PC-9 (cell line): ENCODE measurements at regions of chr12 and their contacts with region 1.

Region 1: GRCh38 chr12:124625867-124626675 is 58.7 kb upstream of the NCOR2 start:
- DNase-seq: peak; percentile 91 to 93
- H3K4me3 ChIP-seq: no peak overlapping the region
- H3K27ac ChIP-seq: peak overlapping the region; percentile 84
- H3K4me1 ChIP-seq: peaks cover 58% of the 10 kb centered on the region
- H3K27me3 ChIP-seq: no peaks in the 10 kb centered on the region
- CTCF ChIP-seq: no peak

Region 2: GRCh38 chr12:124311292-124312109 is 314.6 kb before region 1 on chr12:
- CTCF ChIA-PET with region 1: no interaction called
- POLR2A ChIA-PET with region 1: no interaction called
- intact Hi-C with region 1: no loop called
- DNase-seq: no peak
- H3K4me3 ChIP-seq: no peak overlapping the region
- H3K27ac ChIP-seq: no peak overlapping the region
- H3K4me1 ChIP-seq: no peaks in the 10 kb centered on the region
- H3K27me3 ChIP-seq: peaks cover 50% of the 10 kb centered on the region
- CTCF ChIP-seq: no peak

Region 3: DNA sequence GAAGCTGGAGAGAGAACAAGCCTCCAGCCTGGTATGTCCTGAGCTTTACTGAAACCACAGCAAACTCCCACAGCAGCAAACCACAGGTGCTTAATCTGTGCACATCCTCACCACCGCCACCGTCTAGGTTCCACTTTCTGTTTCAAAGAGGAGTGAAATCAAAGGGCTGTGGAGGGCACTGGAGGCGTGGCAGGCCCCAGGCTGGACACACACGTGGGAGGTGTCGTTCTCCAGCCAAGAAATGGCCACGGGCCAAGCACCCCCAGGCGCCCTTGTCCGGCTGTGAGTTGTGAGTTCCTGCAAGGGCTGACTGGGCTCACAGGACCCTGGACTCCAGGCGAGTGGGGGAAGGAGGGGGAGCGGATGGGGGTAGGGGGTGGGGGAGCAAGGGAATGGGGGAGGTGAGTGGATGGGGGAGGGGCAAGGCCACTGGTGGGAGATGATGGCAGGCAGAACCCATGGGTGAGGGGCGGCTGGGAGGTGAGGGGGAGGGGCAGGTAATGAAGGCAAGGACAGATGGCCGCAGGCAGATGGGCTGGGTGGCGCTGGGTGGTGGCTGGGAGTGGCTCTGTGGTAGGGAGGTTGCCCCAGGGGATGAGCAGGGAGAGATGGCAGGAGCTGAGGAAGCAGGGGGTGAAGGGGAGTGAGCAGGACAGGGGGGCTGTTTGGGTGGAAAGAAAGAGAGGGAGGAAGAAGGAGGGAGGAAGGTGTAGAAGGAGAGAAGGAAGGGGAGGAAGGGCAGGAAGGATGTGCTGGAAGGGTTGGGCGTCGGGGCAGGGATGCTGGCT is 145.4 kb before region 1 on chr12:
- CTCF ChIA-PET with region 1: no interaction called
- POLR2A ChIA-PET with region 1: no interaction called
- intact Hi-C with region 1: no loop called
- DNase-seq: peak; percentile 91 to 98
- H3K4me3 ChIP-seq: no peak overlapping the region; the same call in 1 of the 2 replicates
- H3K27ac ChIP-seq: peak overlapping the region; percentile 59
- H3K4me1 ChIP-seq: peaks cover 28% of the 10 kb centered on the region
- H3K27me3 ChIP-seq: no peaks in the 10 kb centered on the region
- CTCF ChIP-seq: no peak

Region 4: GRCh38 chr12:124581307-124582107 is 44.6 kb before region 1 on chr12:
- CTCF ChIA-PET with region 1: no interaction called
- POLR2A ChIA-PET with region 1: no interaction called
- intact Hi-C with region 1: no loop called
- DNase-seq: no peak
- H3K4me3 ChIP-seq: no peak overlapping the region
- H3K27ac ChIP-seq: no peak overlapping the region
- H3K4me1 ChIP-seq: peaks cover 3% of the 10 kb centered on the region; the same call in 1 of the 2 replicates
- H3K27me3 ChIP-seq: no peaks in the 10 kb centered on the region
- CTCF ChIP-seq: no peak

Region 5: GRCh38 chr12:124656947-124657434 is 30.9 kb after region 1 on chr12:
- CTCF ChIA-PET with region 1: no interaction called
- POLR2A ChIA-PET with region 1: interaction called, 14 read pairs
- intact Hi-C with region 1: no loop called
- DNase-seq: no peak
- H3K4me3 ChIP-seq: no peak overlapping the region
- H3K27ac ChIP-seq: no peak overlapping the region
- H3K4me1 ChIP-seq: no peaks in the 10 kb centered on the region; the same call in 1 of the 2 replicates
- H3K27me3 ChIP-seq: no peaks in the 10 kb centered on the region
- CTCF ChIP-seq: no peak

Region 6: GRCh38 chr12:124767066-124767821 is 141.2 kb after region 1 on chr12:
- CTCF ChIA-PET with region 1: no interaction called
- POLR2A ChIA-PET with region 1: no interaction called
- intact Hi-C with region 1: no loop called
- DNase-seq: peak in 1 of 2 experiments; percentile 71
- H3K4me3 ChIP-seq: no peak overlapping the region
- H3K27ac ChIP-seq: no peak overlapping the region
- H3K4me1 ChIP-seq: peaks cover 25% of the 10 kb centered on the region
- H3K27me3 ChIP-seq: no peaks in the 10 kb centered on the region
- CTCF ChIP-seq: peak; percentile 99